Activated naive CD4-positive, alpha-beta T cell treated with anti-CD3 and anti-CD28 coated beads for 36 hours (primary cell): ENCODE measurements at regions of chr17 and their contacts with region 1.

Region 1: GRCh38 chr17:38982858-38983746 is 15.9 kb upstream of the FBXO47 start:
- DNase-seq: peak; percentile 66
- H3K4me3 Mint-ChIP-seq: no peak overlapping the region
- H3K27ac Mint-ChIP-seq: no peak overlapping the region
- H3K4me1 Mint-ChIP-seq: no peaks in the 10 kb centered on the region
- H3K27me3 Mint-ChIP-seq: no peaks in the 10 kb centered on the region

Region 2: DNA sequence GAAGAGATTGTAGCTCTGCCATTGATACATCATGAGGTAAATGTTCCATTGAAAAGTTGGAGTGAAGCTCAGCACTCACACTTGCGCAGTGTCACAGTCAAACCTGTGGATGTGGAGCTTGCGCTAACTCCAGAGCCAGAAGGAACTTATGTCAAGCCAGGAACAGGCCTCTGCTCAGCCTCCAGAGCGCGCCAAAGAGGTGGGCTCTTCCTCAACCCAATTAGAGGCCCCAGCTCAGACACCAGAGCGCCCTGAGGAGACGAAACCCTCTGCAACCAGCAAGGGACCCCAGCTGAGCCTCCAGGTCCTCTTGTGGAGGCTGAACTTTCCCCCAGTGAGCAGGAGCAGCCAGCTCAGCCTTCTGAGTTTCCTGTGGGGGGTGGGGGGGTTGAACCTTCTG is 45.6 kb after region 1 on chr17:
- CTCF ChIA-PET with region 1: interaction called, 17 read pairs
- intact Hi-C with region 1: no loop called
- DNase-seq: no peak
- H3K4me3 Mint-ChIP-seq: no peak overlapping the region
- H3K27ac Mint-ChIP-seq: no peak overlapping the region
- H3K4me1 Mint-ChIP-seq: peaks cover 11% of the 10 kb centered on the region
- H3K27me3 Mint-ChIP-seq: peaks cover 2% of the 10 kb centered on the region

Region 3: GRCh38 chr17:39057701-39058206 is 74.7 kb after region 1 on chr17:
- CTCF ChIA-PET with region 1: interaction called, 18 read pairs
- intact Hi-C with region 1: loop called (anchors 1 kb)
- DNase-seq: no peak
- H3K4me3 Mint-ChIP-seq: peak overlapping the region; percentile 84
- H3K27ac Mint-ChIP-seq: no peak overlapping the region
- H3K4me1 Mint-ChIP-seq: peaks cover 13% of the 10 kb centered on the region
- H3K27me3 Mint-ChIP-seq: no peaks in the 10 kb centered on the region

Region 4: DNA sequence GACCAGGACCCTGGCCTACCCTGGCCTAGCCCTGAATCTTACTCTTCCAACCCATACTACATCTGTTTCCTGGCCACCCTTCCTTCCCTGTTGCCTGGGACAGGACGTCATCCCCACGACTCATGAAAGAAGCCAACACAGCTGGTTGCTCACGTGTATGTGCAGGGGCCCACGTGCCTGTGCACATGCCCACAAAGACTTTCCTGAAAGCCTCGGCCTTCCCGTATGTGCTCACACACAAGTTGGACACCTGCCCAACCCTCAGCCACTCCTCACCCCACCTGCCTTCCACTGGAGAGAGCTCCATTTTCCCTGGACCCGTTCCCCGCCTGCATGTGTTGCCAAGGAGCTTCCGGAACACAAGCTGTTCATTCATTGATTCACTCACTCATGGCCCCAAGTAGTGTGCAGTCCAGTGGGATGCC is 161.3 kb after region 1 on chr17:
- CTCF ChIA-PET with region 1: interaction called, 12 read pairs
- intact Hi-C with region 1: no loop called
- DNase-seq: no peak
- H3K4me3 Mint-ChIP-seq: no peak overlapping the region
- H3K27ac Mint-ChIP-seq: no peak overlapping the region
- H3K4me1 Mint-ChIP-seq: peaks cover 9% of the 10 kb centered on the region
- H3K27me3 Mint-ChIP-seq: no peaks in the 10 kb centered on the region

Region 5: DNA sequence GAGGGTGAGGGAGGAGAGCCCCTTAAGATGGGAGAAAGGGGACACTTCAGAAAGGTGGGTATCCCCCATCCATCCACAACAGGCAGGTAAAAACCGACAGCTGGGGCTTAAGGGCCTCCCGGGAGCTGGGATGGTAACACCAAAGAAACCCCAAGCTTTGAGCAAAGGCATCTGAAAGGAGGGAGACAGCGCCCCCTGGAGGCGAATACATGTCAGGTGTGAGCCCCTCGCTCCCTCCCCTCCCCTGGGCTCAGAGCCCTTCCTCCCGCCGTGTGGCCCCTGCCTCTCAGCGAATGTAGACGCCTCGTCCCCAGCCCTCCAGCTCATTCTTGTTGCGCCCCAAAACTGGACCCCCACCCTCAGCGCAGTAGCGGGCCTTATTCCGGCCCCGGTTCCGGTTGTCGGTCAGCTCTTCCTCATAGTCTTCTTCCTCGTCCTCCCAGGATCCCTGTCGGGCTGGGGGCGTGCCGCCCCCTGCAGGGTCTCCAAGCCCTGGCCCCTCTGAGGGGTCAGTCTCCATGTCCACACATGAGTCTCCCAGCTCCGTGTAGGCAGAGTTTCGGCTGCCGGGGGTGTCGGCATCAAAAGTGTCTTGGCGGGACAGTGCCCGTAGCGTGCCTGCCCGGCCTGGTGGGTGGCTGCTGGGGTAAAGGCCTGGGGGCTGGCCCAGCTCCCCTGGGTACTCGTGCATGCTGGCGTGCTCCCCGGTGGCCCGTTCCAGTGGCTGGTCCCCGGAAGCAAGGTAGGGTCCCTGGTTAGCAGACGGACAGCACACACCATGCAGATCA is 192.0 kb after region 1 on chr17:
- CTCF ChIA-PET with region 1: interaction called, 44 read pairs
- intact Hi-C with region 1: loop called (anchors 1 kb)
- DNase-seq: peak; percentile 85
- H3K4me3 Mint-ChIP-seq: no peak overlapping the region
- H3K27ac Mint-ChIP-seq: no peak overlapping the region
- H3K4me1 Mint-ChIP-seq: peaks cover 4% of the 10 kb centered on the region
- H3K27me3 Mint-ChIP-seq: no peaks in the 10 kb centered on the region

Region 6: GRCh38 chr17:39244600-39245570 is 261.8 kb after region 1 on chr17:
- CTCF ChIA-PET with region 1: interaction called, 11 read pairs
- intact Hi-C with region 1: loop called (anchors 5 kb)
- DNase-seq: peak; percentile 96
- H3K4me3 Mint-ChIP-seq: no peak overlapping the region
- H3K27ac Mint-ChIP-seq: no peak overlapping the region
- H3K4me1 Mint-ChIP-seq: peaks cover 8% of the 10 kb centered on the region
- H3K27me3 Mint-ChIP-seq: no peaks in the 10 kb centered on the region